Left ventricle myocardium inferior (tissue), 1 donor: ENCODE measurements at regions of chr18 and their contacts with region 1.

Region 1: DNA sequence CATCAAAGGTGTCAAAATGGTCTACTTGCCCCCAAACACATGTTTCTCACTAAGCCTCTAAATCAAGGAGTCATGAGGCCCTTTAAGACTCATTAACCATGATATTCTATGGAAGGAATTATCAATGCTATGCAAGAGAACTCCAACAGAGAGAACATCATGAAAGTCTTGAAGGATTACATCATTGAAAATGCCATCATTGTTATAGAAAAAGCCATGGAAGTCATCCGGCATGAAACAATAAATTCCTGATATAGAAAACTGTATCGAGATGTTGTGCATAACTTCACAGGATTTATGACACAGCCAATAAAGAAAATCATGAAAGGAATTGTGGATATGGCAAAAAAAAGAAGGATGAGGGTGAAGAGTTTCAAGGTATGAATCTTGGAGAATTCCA is 1363.6 kb upstream of the CDH2 start:
- DNase-seq: no peak
- H3K4me3 ChIP-seq: no peak overlapping the region
- H3K27ac ChIP-seq: no peak overlapping the region
- H3K4me1 ChIP-seq: no peaks in the 10 kb centered on the region
- H3K27me3 ChIP-seq: no peaks in the 10 kb centered on the region
- CTCF ChIP-seq: no peak

Region 2: DNA sequence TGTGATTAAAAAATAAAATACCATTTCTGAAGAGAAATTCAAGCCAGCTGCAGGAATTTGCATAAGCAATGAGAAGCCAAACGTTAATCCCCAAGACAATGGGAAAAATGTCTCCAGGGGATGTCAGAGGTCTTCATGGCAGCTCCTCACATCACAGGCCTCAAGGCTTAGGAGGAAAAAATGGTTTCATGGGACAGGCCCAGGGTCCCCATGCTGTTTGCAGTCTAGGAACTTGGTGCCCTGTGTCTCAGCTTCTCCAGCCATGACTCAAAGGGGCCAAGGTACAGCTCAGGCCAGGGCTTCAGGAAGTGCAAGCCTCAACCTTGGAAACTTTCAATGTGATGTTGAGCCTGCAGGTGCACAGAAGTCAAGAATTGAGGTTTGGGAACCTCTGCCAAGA is 64.8 kb after region 1 on chr18:
- intact Hi-C with region 1: loop called (anchors 10 kb)
- DNase-seq: no peak
- H3K4me3 ChIP-seq: no peak overlapping the region
- H3K27ac ChIP-seq: no peak overlapping the region
- H3K4me1 ChIP-seq: no peaks in the 10 kb centered on the region
- H3K27me3 ChIP-seq: no peaks in the 10 kb centered on the region
- CTCF ChIP-seq: no peak